Activated naive CD4-positive, alpha-beta T cell treated with anti-CD3 and anti-CD28 coated beads for 36 hours (primary cell): ENCODE measurements at regions of chr1 and their contacts with region 1.

Region 1: GRCh38 chr1:154324669-154325582 is at the start of gene ATP8B2:
- DNase-seq: peak; percentile 90
- H3K4me3 Mint-ChIP-seq: peak within 1 kb of the TSS; percentile 98
- H3K27ac Mint-ChIP-seq: peak within 1 kb of the TSS; percentile 94
- H3K4me1 Mint-ChIP-seq: peaks cover 37% of the 10 kb centered on the region
- H3K27me3 Mint-ChIP-seq: no peaks in the 10 kb centered on the region
- total RNA-seq, gene ATP8B2: 28.2 to 28.7 TPM

Region 2: GRCh38 chr1:154272217-154272998 is 52.5 kb before region 1 on chr1 and contains the start of gene HAX1:
- CTCF ChIA-PET with region 1: interaction called, 4 read pairs
- intact Hi-C with region 1: loop called (anchors 2 kb)
- DNase-seq: peak; percentile 99
- H3K4me3 Mint-ChIP-seq: peak within 1 kb of the TSS; percentile 98
- H3K27ac Mint-ChIP-seq: peak within 1 kb of the TSS; percentile 99
- H3K4me1 Mint-ChIP-seq: peaks cover 40% of the 10 kb centered on the region
- H3K27me3 Mint-ChIP-seq: no peaks in the 10 kb centered on the region
- total RNA-seq, gene HAX1: 204 to 219 TPM

Region 3: DNA sequence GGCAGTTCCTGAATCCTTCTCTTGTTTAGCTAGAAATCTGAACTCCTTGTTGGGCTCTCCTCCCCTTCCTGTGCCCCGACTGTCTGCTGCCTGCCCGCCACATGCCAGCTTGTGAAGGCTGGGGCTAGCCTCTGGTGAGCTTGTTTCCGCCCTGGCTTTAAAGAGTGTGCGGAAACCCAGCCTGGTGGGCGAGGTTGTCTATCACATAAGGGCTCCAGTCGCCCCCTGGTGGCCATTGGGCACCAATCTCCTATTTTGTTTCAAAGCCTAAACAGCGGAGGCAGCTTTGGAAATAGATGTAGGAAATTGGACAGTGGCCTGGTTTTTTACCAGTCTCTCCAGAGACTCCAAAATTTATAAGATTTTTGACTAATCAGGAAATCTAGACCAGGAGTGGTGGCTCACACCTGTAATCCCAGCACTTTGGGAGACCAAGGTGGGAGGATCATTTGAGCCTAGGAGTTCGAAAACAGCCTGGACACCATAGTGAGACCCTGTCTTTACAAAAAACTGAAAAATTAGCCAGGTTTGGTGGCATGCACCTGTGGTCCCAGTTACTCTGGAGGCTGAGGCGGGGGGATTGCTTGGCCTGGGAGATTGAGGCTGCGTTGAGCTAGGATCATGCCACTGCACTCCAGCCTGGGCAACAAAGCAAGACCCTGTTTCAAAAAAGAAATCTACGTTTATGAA is 10.2 kb after region 1 on chr1:
- CTCF ChIA-PET with region 1: interaction called, 143 read pairs
- intact Hi-C with region 1: loop called (anchors 1 kb)
- DNase-seq: peak; percentile 97
- H3K4me3 Mint-ChIP-seq: peak overlapping the region; percentile 30
- H3K27ac Mint-ChIP-seq: peak overlapping the region; percentile 88
- H3K4me1 Mint-ChIP-seq: peaks cover 62% of the 10 kb centered on the region
- H3K27me3 Mint-ChIP-seq: no peaks in the 10 kb centered on the region

Region 4: DNA sequence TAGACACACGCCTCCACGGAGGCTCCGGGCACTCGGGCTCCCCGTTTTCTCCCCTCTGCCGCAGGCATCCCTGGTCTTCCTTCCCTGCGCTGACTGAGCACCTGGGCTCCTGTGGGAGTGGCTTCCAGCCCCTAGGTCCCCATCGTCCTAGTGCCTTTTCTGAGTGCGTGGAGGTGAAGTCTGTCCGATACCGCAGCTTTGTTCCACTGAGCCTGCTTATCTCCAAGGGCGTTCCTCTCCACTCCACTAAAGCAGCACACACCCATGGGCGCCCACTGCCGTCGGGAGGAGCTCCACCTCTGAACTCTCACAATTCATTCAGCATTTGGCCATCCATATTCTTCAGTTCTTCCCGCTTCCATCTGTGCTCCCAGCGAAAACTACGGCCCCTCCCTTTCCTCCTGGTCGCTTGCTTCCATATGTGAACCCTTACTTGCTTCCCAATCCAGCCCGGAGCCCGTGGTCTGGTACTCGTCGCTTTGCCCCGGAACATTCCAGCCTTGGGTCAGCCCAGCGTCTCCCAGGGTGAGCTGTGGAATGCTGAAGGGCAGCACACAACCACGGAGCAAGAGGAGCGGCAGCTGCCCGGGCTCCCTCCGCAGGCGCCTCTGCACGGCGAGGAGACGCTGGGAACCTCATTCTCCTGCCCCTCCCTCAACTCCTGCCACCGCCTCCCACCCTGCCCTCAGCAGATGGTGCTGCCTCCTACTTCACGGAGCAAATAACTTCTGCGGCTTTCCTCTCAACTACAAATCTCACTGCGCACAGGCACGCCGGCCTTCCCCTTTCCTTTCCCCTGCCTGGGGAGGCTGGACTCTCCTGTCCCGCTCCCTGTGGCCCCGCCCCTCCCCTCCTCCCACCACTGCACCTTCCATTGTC is 27.9 kb after region 1 on chr1:
- CTCF ChIA-PET with region 1: interaction called, 234 read pairs
- intact Hi-C with region 1: loop called (anchors 2 kb)
- DNase-seq: peak; percentile 85
- H3K4me3 Mint-ChIP-seq: peak overlapping the region; percentile 82
- H3K27ac Mint-ChIP-seq: peak overlapping the region; percentile 76
- H3K4me1 Mint-ChIP-seq: peaks cover 31% of the 10 kb centered on the region
- H3K27me3 Mint-ChIP-seq: no peaks in the 10 kb centered on the region

Region 5: GRCh38 chr1:154607609-154608396 is 282.9 kb after region 1 on chr1 and contains the start of gene ADAR:
- CTCF ChIA-PET with region 1: interaction called, 3 read pairs
- intact Hi-C with region 1: loop called (anchors 5 kb)
- DNase-seq: peak; percentile 97
- H3K4me3 Mint-ChIP-seq: peak within 1 kb of the TSS; percentile 91
- H3K27ac Mint-ChIP-seq: peak within 1 kb of the TSS; percentile 96
- H3K4me1 Mint-ChIP-seq: peaks cover 75% of the 10 kb centered on the region
- H3K27me3 Mint-ChIP-seq: no peaks in the 10 kb centered on the region
- total RNA-seq, gene ADAR: 301 to 313 TPM

Region 6: GRCh38 chr1:154703170-154703569 is 378.2 kb after region 1 on chr1:
- CTCF ChIA-PET with region 1: no interaction called
- intact Hi-C with region 1: no loop called
- DNase-seq: no peak
- H3K4me3 Mint-ChIP-seq: no peak overlapping the region
- H3K27ac Mint-ChIP-seq: no peak overlapping the region
- H3K4me1 Mint-ChIP-seq: peaks cover 7% of the 10 kb centered on the region
- H3K27me3 Mint-ChIP-seq: no peaks in the 10 kb centered on the region